Sciatic nerve (tissue), 2 donors: ENCODE measurements at regions of chr3 and their contacts with region 1.

Region 1: GRCh38 chr3:14082108-14082657 is 42.5 kb downstream of the CHCHD4 start:
- DNase-seq: no peak
- ATAC-seq: no peak

Region 2: GRCh38 chr3:14358426-14359211 is 276.4 kb after region 1 on chr3:
- intact Hi-C with region 1: loop called (anchors 10 kb)
- DNase-seq: peak; percentile 78
- ATAC-seq: peak; percentile 83